Left cardiac atrium (tissue), 4 donors: ENCODE measurements at regions of chr11 and their contacts with region 1.

Region 1: GRCh38 chr11:61947486-61948210 is 2.5 kb upstream of the BEST1 start:
- DNase-seq: peak; percentile 92
- ATAC-seq: peak; percentile 82

Region 2: GRCh38 chr11:61797263-61797944 is 150.2 kb before region 1 on chr11:
- intact Hi-C with region 1: loop called (anchors 2 to 5 kb)
- DNase-seq: peak; percentile 82
- ATAC-seq: peak; percentile 15 to 38

Region 3: GRCh38 chr11:61803889-61804647 is 143.6 kb before region 1 on chr11:
- intact Hi-C with region 1: loop called in 1 of 2 experiments (anchors 5 kb)
- DNase-seq: no peak
- ATAC-seq: no peak

Region 4: GRCh38 chr11:61827571-61828378 is 119.9 kb before region 1 on chr11 and contains the start of gene FADS2:
- intact Hi-C with region 1: no loop called
- DNase-seq: peak; percentile 92
- ATAC-seq: peak; percentile 89 to 91
- total RNA-seq, gene FADS2: 26.3 to 67.5 TPM

Region 5: GRCh38 chr11:61871158-61871597 is 76.5 kb before region 1 on chr11:
- intact Hi-C with region 1: loop called in 1 of 2 experiments (anchors 2 kb)
- DNase-seq: peak; percentile 86
- ATAC-seq: peak; percentile 84 to 88

Region 6: DNA sequence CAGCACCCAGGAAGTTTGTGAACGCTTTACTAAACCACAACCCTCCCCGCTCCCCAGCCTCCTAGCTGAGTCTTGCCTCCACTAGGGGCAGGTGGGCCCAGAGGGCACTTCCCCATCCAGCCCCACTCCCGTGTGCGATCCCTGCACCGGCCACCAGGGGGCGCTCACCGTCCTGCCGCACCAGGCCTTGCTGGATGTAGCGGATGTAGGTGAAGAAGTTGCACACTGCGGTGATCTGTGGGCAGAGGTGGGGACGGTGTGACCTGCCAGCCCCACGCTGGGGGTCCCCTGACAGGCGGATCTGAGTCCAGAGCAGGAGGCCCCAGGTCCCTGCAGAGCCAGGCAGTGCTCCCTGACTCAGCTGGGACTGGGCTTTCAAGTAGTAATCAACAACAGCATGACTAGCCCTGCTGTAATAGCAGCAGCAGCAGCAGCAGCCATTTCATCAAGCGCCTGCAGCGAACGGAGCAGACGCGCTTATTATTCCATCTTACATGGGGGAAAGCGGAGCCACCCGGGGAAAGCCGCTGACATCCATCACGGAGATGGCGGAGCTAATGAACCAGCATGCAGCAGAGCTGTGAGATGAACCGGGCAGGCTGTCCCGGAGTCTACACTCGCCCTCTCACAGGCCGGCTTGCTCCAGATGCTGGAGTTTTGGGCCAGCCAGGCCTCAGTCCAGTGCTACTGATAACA is 48.4 kb before region 1 on chr11:
- intact Hi-C with region 1: loop called (anchors 2 to 5 kb)
- DNase-seq: peak; percentile 82
- ATAC-seq: peak; percentile 83 to 85

Region 7: GRCh38 chr11:62081378-62082291 is 134.0 kb after region 1 on chr11:
- intact Hi-C with region 1: loop called in 1 of 2 experiments (anchors 5 kb)
- DNase-seq: peak; percentile 83
- ATAC-seq: peak; percentile 86 to 87

Region 8: GRCh38 chr11:62148271-62148980 is 200.8 kb after region 1 on chr11:
- intact Hi-C with region 1: no loop called
- DNase-seq: no peak
- ATAC-seq: no peak